ENCODE measurements at regions of chr20 and their contacts with region 1.

Region 1: GRCh38 chr20:41939659-41940058 is 321.5 kb upstream of the CHD6 start:
- DNase-seq: no peak
- ATAC-seq: no peak
- H3K4me3 ChIP-seq: no peak overlapping the region
- H3K4me3 Mint-ChIP-seq: no peak overlapping the region
- H3K27ac ChIP-seq: no peak overlapping the region
- H3K27ac Mint-ChIP-seq: no peak overlapping the region
- H3K4me1 ChIP-seq: no peaks in the 10 kb centered on the region
- H3K4me1 Mint-ChIP-seq: no peaks in the 10 kb centered on the region
- H3K27me3 ChIP-seq: peaks cover 0 to 3% of the 10 kb centered on the region in 2 experiments
- H3K27me3 Mint-ChIP-seq: peaks cover 0 to 3% of the 10 kb centered on the region in 2 donors

Region 2: DNA sequence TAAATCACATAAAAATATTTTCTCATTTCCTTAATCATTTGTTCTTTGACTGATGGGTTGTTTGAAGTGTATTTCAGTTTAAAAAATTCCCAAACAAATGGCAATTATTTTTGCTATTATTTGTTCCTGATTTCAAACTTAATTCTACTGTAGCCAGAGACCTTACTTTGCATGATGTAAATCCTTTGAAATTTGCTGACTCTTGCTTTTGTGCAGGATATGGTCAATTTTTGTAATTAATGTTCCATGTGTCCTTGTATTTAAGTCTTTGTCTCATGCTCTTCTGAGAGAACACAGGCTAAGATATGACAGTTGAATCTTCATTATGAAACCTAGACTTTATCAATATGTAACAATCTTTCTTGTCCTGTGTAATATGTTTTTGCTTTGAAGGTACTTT is 26.5 kb before region 1 on chr20:
- CTCF ChIA-PET with region 1: no interaction called
- POLR2A ChIA-PET with region 1: no interaction called
- DNase-seq: no peak
- ATAC-seq: no peak
- H3K4me3 ChIP-seq: no peak overlapping the region
- H3K4me3 Mint-ChIP-seq: no peak overlapping the region
- H3K27ac ChIP-seq: no peak overlapping the region
- H3K27ac Mint-ChIP-seq: no peak overlapping the region
- H3K4me1 ChIP-seq: no peaks in the 10 kb centered on the region
- H3K4me1 Mint-ChIP-seq: no peaks in the 10 kb centered on the region
- H3K27me3 ChIP-seq: no peaks in the 10 kb centered on the region
- H3K27me3 Mint-ChIP-seq: peaks cover 12 to 14% of the 10 kb centered on the region in 2 donors

Region 3: GRCh38 chr20:41956706-41957074 is 17.0 kb after region 1 on chr20:
- CTCF ChIA-PET with region 1: no interaction called
- POLR2A ChIA-PET with region 1: interaction called in 1 of 2 experiments, 10 read pairs
- DNase-seq: no peak
- ATAC-seq: no peak
- H3K4me3 ChIP-seq: no peak overlapping the region
- H3K4me3 Mint-ChIP-seq: no peak overlapping the region
- H3K27ac ChIP-seq: no peak overlapping the region
- H3K27ac Mint-ChIP-seq: no peak overlapping the region
- H3K4me1 ChIP-seq: no peaks in the 10 kb centered on the region
- H3K4me1 Mint-ChIP-seq: no peaks in the 10 kb centered on the region
- H3K27me3 ChIP-seq: no peaks in the 10 kb centered on the region
- H3K27me3 Mint-ChIP-seq: peaks cover 3 to 15% of the 10 kb centered on the region in 2 donors

Measured in T-cell (primary cell).